Endothelial cell of umbilical vein (primary cell): ENCODE measurements at regions of chr1 and their contacts with region 1.

Region 1: GRCh38 chr1:58783993-58784757 is at the start of gene JUN:
- DNase-seq: peak; percentile 100
- H3K4me3 ChIP-seq: peak within 1 kb of the TSS; percentile 60 to 91 (median 80)
- H3K27ac ChIP-seq: peak within 1 kb of the TSS; percentile 97
- H3K4me1 ChIP-seq: peaks cover 30% of the 10 kb centered on the region
- H3K27me3 ChIP-seq: no peaks in the 10 kb centered on the region
- CTCF ChIP-seq: no peak
- POLR2A ChIP-seq: peak; percentile 100
- total RNA-seq, gene JUN: 81.1 and 88.3 TPM in 2 replicates

Region 2: GRCh38 chr1:58679463-58679862 is 104.7 kb before region 1 on chr1:
- CTCF ChIA-PET with region 1: no interaction called
- POLR2A ChIA-PET with region 1: no interaction called
- dilution Hi-C with region 1: no loop called
- intact Hi-C with region 1: no loop called
- DNase-seq: no peak
- H3K4me3 ChIP-seq: no peak overlapping the region
- H3K27ac ChIP-seq: no peak overlapping the region
- H3K4me1 ChIP-seq: peaks cover 10% of the 10 kb centered on the region
- H3K27me3 ChIP-seq: no peaks in the 10 kb centered on the region
- CTCF ChIP-seq: no peak
- POLR2A ChIP-seq: no peak

Region 3: GRCh38 chr1:58768971-58769808 is 15.0 kb before region 1 on chr1:
- CTCF ChIA-PET with region 1: interaction called, 9 read pairs
- POLR2A ChIA-PET with region 1: interaction called, 23 read pairs
- dilution Hi-C with region 1: no loop called
- intact Hi-C with region 1: no loop called
- DNase-seq: peak; percentile 74
- H3K4me3 ChIP-seq: no peak overlapping the region
- H3K27ac ChIP-seq: no peak overlapping the region
- H3K4me1 ChIP-seq: peaks cover 34% of the 10 kb centered on the region
- H3K27me3 ChIP-seq: no peaks in the 10 kb centered on the region
- CTCF ChIP-seq: peak; percentile 71 to 81
- POLR2A ChIP-seq: no peak

Region 4: GRCh38 chr1:58883037-58883887 is 99.1 kb after region 1 on chr1:
- CTCF ChIA-PET with region 1: interaction called, 10 read pairs
- POLR2A ChIA-PET with region 1: interaction called, 22 read pairs
- dilution Hi-C with region 1: no loop called
- intact Hi-C with region 1: loop called (anchors 1 kb)
- DNase-seq: peak; percentile 99
- H3K4me3 ChIP-seq: no peak overlapping the region
- H3K27ac ChIP-seq: peak overlapping the region; percentile 99
- H3K4me1 ChIP-seq: peaks cover 42% of the 10 kb centered on the region
- H3K27me3 ChIP-seq: no peaks in the 10 kb centered on the region
- CTCF ChIP-seq: no peak
- POLR2A ChIP-seq: no peak

Region 5: GRCh38 chr1:59061876-59062275 is 277.7 kb after region 1 on chr1:
- CTCF ChIA-PET with region 1: interaction called, 3 read pairs
- POLR2A ChIA-PET with region 1: interaction called, 16 read pairs
- dilution Hi-C with region 1: no loop called
- intact Hi-C with region 1: loop called (anchors 1 kb)
- DNase-seq: peak; percentile 94
- H3K4me3 ChIP-seq: peak overlapping the region in 2 of 3 experiments; percentile 1 to 62
- H3K27ac ChIP-seq: peak overlapping the region; percentile 75
- H3K4me1 ChIP-seq: peaks cover 26% of the 10 kb centered on the region
- H3K27me3 ChIP-seq: no peaks in the 10 kb centered on the region
- CTCF ChIP-seq: no peak
- POLR2A ChIP-seq: peak; percentile 47

Region 6: DNA sequence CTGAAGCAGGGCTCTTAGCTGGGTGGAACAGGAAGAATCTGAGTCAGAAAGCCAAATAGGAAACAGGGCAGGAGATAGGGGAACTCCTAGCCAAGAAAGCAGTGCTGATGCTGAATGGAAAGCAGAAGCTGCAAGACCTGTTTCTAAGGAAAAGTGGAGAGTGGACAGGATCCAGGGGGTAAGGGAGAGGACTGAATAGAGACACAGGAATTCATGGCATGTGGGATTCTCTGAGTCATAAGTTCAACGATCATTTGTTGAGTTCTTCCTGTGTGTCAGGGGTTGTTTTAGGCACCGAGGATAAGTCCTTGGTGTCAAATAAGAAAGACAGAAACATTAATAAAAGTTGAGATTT is 358.9 kb after region 1 on chr1:
- CTCF ChIA-PET with region 1: no interaction called
- POLR2A ChIA-PET with region 1: interaction called, 4 read pairs
- dilution Hi-C with region 1: no loop called
- intact Hi-C with region 1: loop called (anchors 1 kb)
- DNase-seq: peak; percentile 91
- H3K4me3 ChIP-seq: no peak overlapping the region
- H3K27ac ChIP-seq: peak overlapping the region; percentile 82
- H3K4me1 ChIP-seq: peaks cover 43% of the 10 kb centered on the region
- H3K27me3 ChIP-seq: no peaks in the 10 kb centered on the region
- CTCF ChIP-seq: no peak
- POLR2A ChIP-seq: peak; percentile 45

Region 7: GRCh38 chr1:59699227-59699847 is 915.2 kb after region 1 on chr1:
- CTCF ChIA-PET with region 1: interaction called, 23 read pairs
- POLR2A ChIA-PET with region 1: no interaction called
- dilution Hi-C with region 1: no loop called
- intact Hi-C with region 1: loop called (anchors 1 kb)
- DNase-seq: peak; percentile 62
- H3K4me3 ChIP-seq: no peak overlapping the region
- H3K27ac ChIP-seq: no peak overlapping the region
- H3K4me1 ChIP-seq: peaks cover 4% of the 10 kb centered on the region
- H3K27me3 ChIP-seq: no peaks in the 10 kb centered on the region
- CTCF ChIP-seq: peak; percentile 72 to 78
- POLR2A ChIP-seq: no peak